ENCODE measurements at regions of chr12 and their contacts with region 1.

Region 1: DNA sequence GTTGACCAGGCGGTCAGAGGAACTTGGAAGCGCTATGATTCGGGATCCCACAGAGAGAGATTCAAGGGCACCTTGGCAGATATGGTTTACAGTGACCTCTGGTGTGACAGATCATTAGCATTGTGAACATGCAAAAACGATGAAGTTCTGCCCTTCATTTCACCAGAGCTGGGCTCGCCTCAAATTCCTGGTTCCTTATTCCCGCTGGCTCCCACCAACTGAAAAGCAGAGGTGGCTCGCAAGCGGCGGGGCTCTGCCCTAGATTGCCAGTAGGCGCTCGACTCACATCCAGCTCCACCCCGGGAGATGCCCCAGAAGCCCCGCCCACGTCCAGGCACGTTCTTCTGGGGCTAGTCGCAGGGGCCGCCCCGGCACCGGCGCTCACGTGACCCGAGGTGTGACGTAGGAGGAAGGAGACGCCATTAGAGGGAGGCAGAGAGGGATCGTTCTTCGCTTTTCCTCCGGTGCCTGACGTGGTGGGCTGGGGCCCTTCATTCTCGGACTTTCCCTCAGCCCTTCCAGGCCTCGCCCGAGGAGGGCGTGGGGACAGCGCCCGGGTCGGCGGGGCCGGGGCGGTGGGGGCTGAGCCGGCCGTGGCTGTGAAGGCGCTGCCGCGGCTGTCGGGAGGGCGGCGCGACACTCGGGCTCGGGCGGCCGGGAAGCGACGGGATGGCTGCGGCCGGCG is at the start of gene RAB21:
- H3K4me3 ChIP-seq: peak within 1 kb of the TSS; percentile 92
- H3K27ac ChIP-seq: peak within 1 kb of the TSS; percentile 67
- H3K4me1 ChIP-seq: no peaks in the 10 kb centered on the region
- CTCF ChIP-seq: peak; percentile 80

Region 2: DNA sequence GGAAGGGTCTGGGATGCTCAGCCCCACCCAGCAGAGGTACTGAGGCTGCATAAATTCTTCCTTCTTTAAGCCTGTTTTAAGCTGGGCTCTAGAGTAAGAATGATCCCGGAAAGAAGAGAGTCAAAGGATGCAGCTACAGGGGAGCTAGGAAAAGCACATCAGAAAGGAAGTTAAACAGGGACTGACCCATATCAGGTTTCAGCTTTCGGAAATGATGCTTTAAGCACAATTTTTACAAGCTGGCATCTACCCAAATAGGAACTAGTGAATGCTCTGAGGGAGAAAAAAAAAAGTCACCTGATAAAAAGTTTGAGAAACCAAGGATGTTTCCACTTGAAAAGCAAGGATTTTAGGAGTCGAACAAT is 618.8 kb before region 1 on chr12:
- CTCF ChIA-PET with region 1: no interaction called
- POLR2A ChIA-PET with region 1: no interaction called
- H3K4me3 ChIP-seq: no peak overlapping the region
- H3K27ac ChIP-seq: no peak overlapping the region
- H3K4me1 ChIP-seq: peaks cover 11% of the 10 kb centered on the region
- CTCF ChIP-seq: no peak

Region 3: GRCh38 chr12:71536279-71536938 is 218.2 kb before region 1 on chr12:
- CTCF ChIA-PET with region 1: no interaction called
- POLR2A ChIA-PET with region 1: no interaction called
- H3K4me3 ChIP-seq: no peak overlapping the region
- H3K27ac ChIP-seq: no peak overlapping the region
- H3K4me1 ChIP-seq: no peaks in the 10 kb centered on the region
- CTCF ChIP-seq: no peak

Region 4: GRCh38 chr12:71663561-71664294 is 90.9 kb before region 1 on chr12 and contains the start of gene ZFC3H1:
- CTCF ChIA-PET with region 1: interaction called, 3 read pairs
- POLR2A ChIA-PET with region 1: interaction called, 16 read pairs
- H3K4me3 ChIP-seq: peak within 1 kb of the TSS; percentile 71
- H3K27ac ChIP-seq: peak within 1 kb of the TSS; percentile 83
- H3K4me1 ChIP-seq: peaks cover 2% of the 10 kb centered on the region; the same call in 1 of the 2 replicates
- CTCF ChIP-seq: peak; percentile 94

Region 5: DNA sequence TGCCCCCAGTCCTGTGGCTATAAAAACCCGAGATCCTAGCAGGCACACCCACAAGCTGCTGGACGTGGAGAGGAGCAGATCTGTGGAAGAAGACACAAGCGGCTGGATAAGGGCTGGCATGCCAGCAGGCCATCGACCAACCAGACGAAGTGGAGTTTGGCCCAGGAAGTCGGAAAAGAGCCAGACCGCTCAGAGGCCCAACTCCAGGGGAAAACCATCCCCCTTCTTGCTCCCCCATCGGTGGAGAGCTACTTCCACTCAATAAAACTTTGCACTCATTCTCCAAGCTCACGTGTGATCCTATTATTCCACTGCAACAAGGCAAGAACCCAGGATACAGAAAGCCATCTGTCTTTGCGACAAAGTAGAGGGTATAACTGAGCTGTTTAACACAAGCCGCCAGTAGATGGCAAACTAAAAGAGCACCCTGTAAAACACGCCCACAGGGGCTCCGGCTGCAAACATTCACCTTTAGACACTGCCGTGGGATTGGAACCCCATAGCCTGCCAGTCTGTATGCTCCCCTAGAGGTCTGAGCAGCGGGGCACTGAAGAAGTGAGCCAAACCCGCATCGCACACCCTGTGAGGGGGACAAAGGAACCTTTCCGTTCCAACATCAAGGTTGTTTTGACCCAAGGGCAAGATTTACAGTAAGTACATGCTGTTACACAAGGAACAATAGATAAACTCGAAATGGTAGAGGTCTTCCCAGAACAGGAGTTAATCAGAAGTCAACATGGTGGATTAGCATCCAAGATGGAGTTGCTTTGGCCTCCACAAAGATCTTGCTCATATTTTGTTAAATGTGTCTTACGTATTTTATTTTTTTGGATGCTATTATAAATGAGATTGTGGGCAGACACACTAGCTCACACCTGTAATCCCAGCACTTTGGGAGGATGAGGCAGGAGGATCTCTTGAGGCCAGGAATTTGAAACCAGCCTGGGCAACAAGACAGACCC is 22.6 kb before region 1 on chr12:
- CTCF ChIA-PET with region 1: no interaction called
- POLR2A ChIA-PET with region 1: no interaction called
- H3K4me3 ChIP-seq: no peak overlapping the region
- H3K27ac ChIP-seq: no peak overlapping the region
- H3K4me1 ChIP-seq: no peaks in the 10 kb centered on the region
- CTCF ChIP-seq: no peak

Measured in HEK293 (cell line).